Activated T-helper 2 cell treated with anti-CD3 and anti-CD28 coated beads, Interferon-gamma antibody, Interleukin-2, Interleukin-4, amounts not matched to agents 10 μg/mL and 5 μg/mL and 100 μg/mL, durations not matched to agents 14 hours and 24 hours and 36 hours (primary cell): ENCODE measurements at regions of chr22 and their contacts with region 1.

Region 1: GRCh38 chr22:26672590-26673468 is 15.4 kb downstream of the MIAT start:
- DNase-seq: peak; percentile 92
- H3K4me3 Mint-ChIP-seq: peak overlapping the region; percentile 93
- H3K27ac Mint-ChIP-seq: peak overlapping the region; percentile 94
- H3K4me1 Mint-ChIP-seq: peaks cover 57% of the 10 kb centered on the region
- H3K27me3 Mint-ChIP-seq: no peaks in the 10 kb centered on the region

Region 2: GRCh38 chr22:25069758-25070481 is 1602.9 kb before region 1 on chr22:
- intact Hi-C with region 1: loop called (anchors 10 kb)
- DNase-seq: peak; percentile 22
- H3K4me3 Mint-ChIP-seq: peak overlapping the region; percentile 84
- H3K27ac Mint-ChIP-seq: peak overlapping the region; percentile 95
- H3K4me1 Mint-ChIP-seq: peaks cover 65% of the 10 kb centered on the region
- H3K27me3 Mint-ChIP-seq: no peaks in the 10 kb centered on the region

Region 3: GRCh38 chr22:26483439-26484359 is 189.1 kb before region 1 on chr22 and contains the starts of genes HPS4 and SRRD:
- intact Hi-C with region 1: loop called (anchors 5 kb)
- DNase-seq: peak; percentile 90
- H3K4me3 Mint-ChIP-seq: peak within 1 kb of the TSS; percentile 89
- H3K27ac Mint-ChIP-seq: peak within 1 kb of the TSS; percentile 86
- H3K4me1 Mint-ChIP-seq: peaks cover 60% of the 10 kb centered on the region
- H3K27me3 Mint-ChIP-seq: no peaks in the 10 kb centered on the region
- total RNA-seq, gene HPS4: 39.0 and 39.4 TPM in 2 replicates
- total RNA-seq, gene SRRD: 21.6 and 23.0 TPM in 2 replicates

Region 4: GRCh38 chr22:26589845-26590736 is 82.7 kb before region 1 on chr22 and contains the start of gene TPST2:
- intact Hi-C with region 1: loop called (anchors 5 kb)
- DNase-seq: peak; percentile 70
- H3K4me3 Mint-ChIP-seq: peak within 1 kb of the TSS; percentile 87
- H3K27ac Mint-ChIP-seq: peak within 1 kb of the TSS; percentile 80
- H3K4me1 Mint-ChIP-seq: peaks cover 50% of the 10 kb centered on the region
- H3K27me3 Mint-ChIP-seq: no peaks in the 10 kb centered on the region
- total RNA-seq, gene TPST2: 13.7 and 14.2 TPM in 2 replicates

Region 5: DNA sequence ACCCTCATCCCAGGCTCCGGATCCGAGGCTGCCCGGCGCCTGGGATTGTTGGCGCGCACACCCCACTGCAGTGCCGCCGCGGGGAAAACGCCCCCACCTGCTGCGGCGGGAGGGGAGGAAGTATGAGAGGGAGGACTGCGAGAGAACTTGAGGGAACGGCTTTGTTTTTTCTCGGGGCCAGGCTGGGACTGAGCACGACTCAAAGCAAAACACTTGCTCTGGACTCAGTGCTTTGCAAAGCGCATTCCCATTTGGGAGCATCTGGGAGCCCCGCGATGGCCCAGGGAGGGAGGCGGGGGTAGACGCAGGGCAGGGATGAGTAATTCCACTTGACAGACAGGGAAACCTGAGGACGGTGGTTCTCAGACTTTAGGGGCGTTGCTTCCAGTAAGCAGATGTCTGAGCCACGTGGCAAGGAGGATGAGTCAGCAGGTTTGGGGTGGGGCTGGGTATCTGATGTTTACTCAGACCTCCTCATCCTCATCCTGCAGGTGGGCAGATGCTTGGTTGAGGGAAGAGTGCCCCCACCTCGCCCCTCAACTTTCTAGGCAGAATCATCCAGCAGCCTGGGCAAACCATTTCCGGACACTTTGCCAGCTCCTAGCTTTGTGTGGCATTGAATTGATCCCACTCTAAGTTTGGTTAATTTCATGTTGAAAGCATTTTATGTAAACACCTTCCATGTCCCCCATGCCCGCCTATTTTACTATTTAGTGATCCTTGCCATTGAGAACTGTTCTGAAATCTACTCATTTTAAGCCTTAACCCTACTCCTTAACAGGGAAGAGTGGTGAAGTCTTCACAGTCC is 14.0 kb before region 1 on chr22:
- intact Hi-C with region 1: loop called (anchors 1 kb)
- DNase-seq: peak; percentile 69
- H3K4me3 Mint-ChIP-seq: peak overlapping the region; percentile 84
- H3K27ac Mint-ChIP-seq: peak overlapping the region; percentile 84
- H3K4me1 Mint-ChIP-seq: peaks cover 26% of the 10 kb centered on the region
- H3K27me3 Mint-ChIP-seq: peaks cover 13% of the 10 kb centered on the region